ENCODE measurements at regions of chr1 and their contacts with region 1.

Region 1: GRCh38 chr1:212981571-212982328 is 31.4 kb downstream of the VASH2 start:
- DNase-seq: no peak
- H3K4me3 ChIP-seq: no peak overlapping the region
- H3K27ac ChIP-seq: no peak overlapping the region
- H3K4me1 ChIP-seq: no peaks in the 10 kb centered on the region
- H3K27me3 ChIP-seq: no peaks in the 10 kb centered on the region
- CTCF ChIP-seq: no peak
- EP300 ChIP-seq: no peak
- POLR2A ChIP-seq: no peak

Region 2: GRCh38 chr1:212558693-212559480 is 422.9 kb before region 1 on chr1:
- intact Hi-C with region 1: no loop called
- DNase-seq: peak; percentile 90 to 95 (median 93)
- H3K4me3 ChIP-seq: peak overlapping the region; percentile 82
- H3K27ac ChIP-seq: peak overlapping the region; percentile 34 to 84
- H3K4me1 ChIP-seq: peaks cover 3% of the 10 kb centered on the region
- H3K27me3 ChIP-seq: no peaks in the 10 kb centered on the region
- CTCF ChIP-seq: no peak
- EP300 ChIP-seq: peak; percentile 97
- POLR2A ChIP-seq: peak; percentile 59

Region 3: GRCh38 chr1:212814537-212815334 is 167.0 kb before region 1 on chr1:
- intact Hi-C with region 1: no loop called
- DNase-seq: no peak
- H3K4me3 ChIP-seq: no peak overlapping the region
- H3K27ac ChIP-seq: no peak overlapping the region
- H3K4me1 ChIP-seq: no peaks in the 10 kb centered on the region
- H3K27me3 ChIP-seq: no peaks in the 10 kb centered on the region
- CTCF ChIP-seq: no peak
- EP300 ChIP-seq: no peak
- POLR2A ChIP-seq: no peak

Region 4: GRCh38 chr1:213051127-213051880 is 69.6 kb after region 1 on chr1 and contains the start of gene RPS6KC1:
- intact Hi-C with region 1: no loop called
- DNase-seq: peak; percentile 75 to 87 (median 78)
- H3K4me3 ChIP-seq: peak within 1 kb of the TSS; percentile 88
- H3K27ac ChIP-seq: peak within 1 kb of the TSS; percentile 30 to 47
- H3K4me1 ChIP-seq: peaks cover 2% of the 10 kb centered on the region
- H3K27me3 ChIP-seq: no peaks in the 10 kb centered on the region
- CTCF ChIP-seq: no peak
- EP300 ChIP-seq: no peak
- POLR2A ChIP-seq: no peak
- total RNA-seq, gene RPS6KC1: 16.0 to 24.6 (median 19.2) TPM

Region 5: DNA sequence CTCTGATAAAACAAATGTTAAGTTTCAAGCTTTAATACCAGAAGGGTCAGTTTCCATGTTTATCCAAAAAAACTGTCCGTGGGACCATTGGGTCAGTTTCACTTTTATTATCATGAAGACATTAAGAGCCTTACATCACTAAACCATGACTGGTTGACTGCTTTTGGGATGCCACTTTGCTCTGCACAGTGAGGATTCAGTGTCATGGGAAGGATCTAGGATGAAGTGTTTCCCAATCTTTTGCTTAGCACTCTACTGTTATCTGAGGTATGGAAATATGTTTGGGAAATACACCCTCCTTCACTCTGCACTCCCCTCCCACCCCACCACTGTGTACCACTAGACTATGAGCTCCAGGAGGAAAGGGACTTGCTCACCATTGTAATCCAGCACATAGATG is 85.6 kb after region 1 on chr1:
- intact Hi-C with region 1: no loop called
- DNase-seq: no peak
- H3K4me3 ChIP-seq: no peak overlapping the region
- H3K27ac ChIP-seq: no peak overlapping the region
- H3K4me1 ChIP-seq: no peaks in the 10 kb centered on the region
- H3K27me3 ChIP-seq: no peaks in the 10 kb centered on the region
- CTCF ChIP-seq: no peak
- EP300 ChIP-seq: no peak
- POLR2A ChIP-seq: no peak

Region 6: DNA sequence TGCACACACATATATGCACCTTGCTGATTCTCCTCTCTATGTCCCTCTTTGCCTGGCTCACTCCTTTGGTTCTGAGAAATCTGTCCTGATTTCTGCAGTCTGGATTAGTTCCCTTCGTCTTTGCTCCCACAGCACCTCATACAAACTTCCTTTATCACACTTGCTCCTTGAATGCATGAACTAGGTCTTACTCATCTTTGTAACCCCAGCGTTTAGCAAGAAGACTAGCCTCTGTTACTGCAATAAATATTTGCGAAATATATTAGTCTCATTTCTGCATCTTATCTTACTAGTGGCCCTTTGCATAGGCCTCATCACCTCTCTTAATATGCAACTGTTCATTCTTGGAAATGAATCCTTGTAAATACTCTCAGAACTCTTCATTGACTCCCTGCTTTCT is 1310.6 kb after region 1 on chr1:
- intact Hi-C with region 1: loop called in 1 of 4 experiments (anchors 5 kb)
- DNase-seq: no peak
- H3K4me3 ChIP-seq: no peak overlapping the region
- H3K27ac ChIP-seq: no peak overlapping the region
- H3K4me1 ChIP-seq: no peaks in the 10 kb centered on the region
- H3K27me3 ChIP-seq: no peaks in the 10 kb centered on the region
- CTCF ChIP-seq: no peak
- EP300 ChIP-seq: no peak
- POLR2A ChIP-seq: no peak